ENCODE measurements at regions of chr11 and their contacts with region 1.

Region 1: GRCh38 chr11:75388386-75389275 is 10.7 kb upstream of the RPS3 start:
- DNase-seq: peak; percentile 73
- H3K4me3 ChIP-seq: no peak overlapping the region
- H3K27ac ChIP-seq: peak overlapping the region in 3 of 4 donors; percentile 20 to 75 (median 69)
- H3K4me1 ChIP-seq: peaks cover 0 to 39% (median 18%) of the 10 kb centered on the region in 4 donors
- H3K27me3 ChIP-seq: no peaks in the 10 kb centered on the region
- CTCF ChIP-seq: peak; percentile 82 to 91 (median 88)
- EP300 ChIP-seq: no peak
- POLR2A ChIP-seq: no peak

Region 2: DNA sequence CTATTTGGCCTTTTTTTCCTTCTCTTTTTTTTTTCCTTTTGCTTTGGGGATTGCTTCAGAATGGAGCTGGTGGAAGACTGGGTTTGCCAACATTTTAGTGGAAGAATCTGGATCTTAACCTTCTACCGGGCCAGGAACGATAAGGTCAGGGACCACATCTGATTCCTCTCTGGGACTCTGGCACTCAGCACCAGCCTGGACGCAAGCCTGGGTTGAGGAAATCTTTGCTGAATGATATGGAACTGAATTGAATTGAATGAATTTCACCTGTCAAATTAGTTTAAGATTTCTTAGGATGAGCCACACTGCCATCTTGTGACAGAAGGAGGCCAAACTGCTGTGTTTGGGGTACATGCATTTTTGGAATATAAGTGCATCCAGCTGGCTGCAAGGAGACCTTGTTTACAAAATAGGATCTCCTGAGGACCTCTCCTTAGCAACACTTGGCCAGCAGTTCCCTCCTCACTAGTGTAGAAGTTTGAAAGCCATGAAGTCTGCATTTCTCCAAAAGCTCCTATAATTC is 117.7 kb before region 1 on chr11:
- in situ Hi-C with region 1: loop called (anchors 5 to 10 kb)
- intact Hi-C with region 1: no loop called
- DNase-seq: peak; percentile 6
- H3K4me3 ChIP-seq: no peak overlapping the region
- H3K27ac ChIP-seq: no peak overlapping the region
- H3K4me1 ChIP-seq: no peaks in the 10 kb centered on the region
- H3K27me3 ChIP-seq: no peaks in the 10 kb centered on the region
- CTCF ChIP-seq: no peak
- EP300 ChIP-seq: no peak
- POLR2A ChIP-seq: no peak

Region 3: DNA sequence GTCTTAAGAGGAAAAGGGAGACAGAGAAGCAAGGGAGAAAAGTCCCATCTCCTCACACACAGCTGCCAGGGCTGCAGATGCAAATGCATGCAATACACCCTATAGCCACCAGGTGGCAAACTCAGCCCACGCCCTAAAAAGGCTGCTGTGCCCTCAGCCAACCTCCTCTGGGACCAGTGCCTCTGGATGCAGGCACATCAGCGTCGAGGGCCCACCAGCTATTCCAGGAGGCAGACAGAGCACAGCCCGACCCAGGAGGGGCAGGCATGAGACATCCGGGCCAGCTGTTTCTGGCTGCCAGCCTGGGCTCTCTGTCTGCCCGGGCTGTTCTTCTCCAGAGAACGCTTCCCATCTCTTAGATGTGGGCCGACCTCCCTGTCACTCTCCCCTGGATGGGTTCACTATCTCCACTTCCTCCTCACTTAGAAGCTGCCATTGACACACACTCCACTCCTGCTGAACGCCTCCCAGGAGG is 108.4 kb before region 1 on chr11:
- in situ Hi-C with region 1: loop called (anchors 5 to 10 kb)
- intact Hi-C with region 1: loop called (anchors 1 kb)
- DNase-seq: peak; percentile 83
- H3K4me3 ChIP-seq: no peak overlapping the region
- H3K27ac ChIP-seq: peak overlapping the region in 3 of 4 donors; percentile 13 to 24 (median 18)
- H3K4me1 ChIP-seq: peaks cover 0 to 9% (median 3%) of the 10 kb centered on the region in 4 donors
- H3K27me3 ChIP-seq: no peaks in the 10 kb centered on the region
- CTCF ChIP-seq: peak; percentile 96 to 98 (median 98)
- EP300 ChIP-seq: no peak
- POLR2A ChIP-seq: no peak

Region 4: DNA sequence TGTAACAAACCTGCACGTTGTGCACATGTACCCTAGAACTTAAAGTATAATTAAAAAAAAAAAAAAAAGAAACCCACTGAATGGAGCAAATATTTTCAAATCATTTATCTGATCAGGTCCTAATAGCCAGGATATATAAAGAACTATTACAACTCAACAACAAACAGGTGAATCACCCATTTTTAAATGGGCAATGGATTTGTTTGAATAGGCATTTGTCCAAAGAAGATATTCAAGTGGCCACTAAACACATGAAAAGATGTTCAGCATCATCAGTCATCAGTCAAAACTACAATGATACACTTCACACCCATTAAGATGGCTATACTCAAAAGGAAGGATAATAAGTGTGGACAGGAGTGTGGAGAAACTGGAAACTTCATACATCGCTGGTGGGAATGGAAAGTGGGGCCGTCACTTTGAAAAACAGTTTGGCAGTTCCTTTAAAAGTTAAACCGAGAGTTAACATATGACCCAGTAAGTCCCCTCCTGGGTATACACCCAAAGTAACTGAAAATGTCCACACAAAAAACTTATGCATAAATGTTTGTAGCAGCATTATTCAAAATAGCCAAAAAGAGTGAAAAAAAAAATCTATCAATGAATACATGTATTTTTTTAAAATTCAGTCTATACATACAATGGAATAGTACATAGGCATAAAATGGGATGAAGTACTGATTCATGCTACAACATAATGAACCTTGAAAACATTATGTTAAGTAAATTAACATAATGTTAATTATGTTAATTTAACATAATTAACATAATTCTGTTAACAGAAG is 90.2 kb before region 1 on chr11:
- in situ Hi-C with region 1: no loop called
- intact Hi-C with region 1: no loop called
- DNase-seq: no peak
- H3K4me3 ChIP-seq: no peak overlapping the region
- H3K27ac ChIP-seq: no peak overlapping the region
- H3K4me1 ChIP-seq: peaks cover 10 to 21% (median 15%) of the 10 kb centered on the region in 4 donors
- H3K27me3 ChIP-seq: no peaks in the 10 kb centered on the region
- CTCF ChIP-seq: no peak
- EP300 ChIP-seq: no peak
- POLR2A ChIP-seq: no peak

Region 5: DNA sequence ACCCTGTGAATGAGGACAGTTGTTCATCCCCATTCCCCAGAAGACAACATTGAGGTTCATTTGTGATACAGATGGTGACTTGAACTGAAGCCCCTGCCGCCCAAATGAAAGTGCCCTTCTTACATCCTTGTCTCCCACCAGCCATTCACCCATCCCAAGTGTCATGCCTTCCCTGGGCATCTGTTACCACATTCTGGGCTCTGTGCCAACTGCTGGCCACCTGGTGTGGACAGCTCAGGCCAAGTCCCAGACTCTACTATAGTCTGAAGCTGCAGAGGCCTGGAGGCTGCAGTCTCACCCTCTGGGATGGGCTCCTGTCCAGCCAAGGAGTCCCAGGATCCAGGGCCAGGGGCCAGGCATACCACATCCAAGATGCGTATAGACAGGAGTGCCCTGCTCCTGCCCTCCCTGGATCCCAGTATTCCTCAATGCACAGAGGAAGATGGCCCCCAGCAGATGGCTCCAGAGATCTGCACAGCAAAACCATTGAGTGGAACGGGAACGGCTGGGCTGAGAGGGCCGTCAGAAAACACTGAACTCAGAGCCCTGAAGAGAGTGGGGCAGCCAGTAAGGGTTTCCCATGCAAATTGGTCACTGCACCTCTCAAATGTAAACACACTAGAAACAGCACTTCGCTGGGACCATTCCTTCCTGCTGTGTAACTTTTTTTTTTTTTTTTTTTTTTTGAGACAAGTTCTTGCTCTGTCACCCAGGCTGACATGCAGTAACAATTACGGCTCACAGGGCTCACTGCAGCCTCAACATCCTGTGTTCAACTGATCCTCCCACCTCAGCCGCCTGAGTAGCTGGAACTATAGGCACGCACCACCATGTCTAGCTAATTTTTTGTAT is 60.0 kb before region 1 on chr11:
- in situ Hi-C with region 1: loop called in 3 of 4 experiments (anchors 5 to 10 kb)
- intact Hi-C with region 1: loop called (anchors 1 kb)
- DNase-seq: peak; percentile 85
- H3K4me3 ChIP-seq: no peak overlapping the region
- H3K27ac ChIP-seq: peak overlapping the region; percentile 80 to 87 (median 83)
- H3K4me1 ChIP-seq: peaks cover 53 to 85% (median 78%) of the 10 kb centered on the region in 4 donors
- H3K27me3 ChIP-seq: no peaks in the 10 kb centered on the region
- CTCF ChIP-seq: peak; percentile 58 to 82 (median 69)
- EP300 ChIP-seq: no peak
- POLR2A ChIP-seq: no peak

Region 6: DNA sequence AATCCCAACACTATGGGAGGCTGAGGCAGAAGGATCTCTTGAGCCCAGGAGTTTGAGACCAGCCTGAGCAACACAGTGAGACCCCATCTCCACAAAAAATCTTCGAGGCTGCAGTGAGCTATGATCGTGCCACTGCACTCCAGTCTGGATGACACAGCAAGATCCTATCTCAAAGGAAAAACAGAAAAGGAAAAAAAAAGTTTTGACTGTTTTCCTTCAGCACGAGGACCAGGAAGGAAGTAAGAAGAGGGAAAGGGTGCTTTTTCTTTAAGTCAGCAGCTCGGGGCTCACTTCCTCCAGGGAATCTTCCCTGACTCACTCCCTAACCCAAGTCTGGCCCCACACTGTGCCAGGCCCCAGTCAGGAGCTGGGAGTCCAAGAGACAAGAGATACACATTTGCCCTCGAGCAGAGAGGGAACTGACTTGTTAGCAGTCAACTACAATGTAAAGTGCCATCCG is 51.4 kb before region 1 on chr11:
- in situ Hi-C with region 1: loop called in 2 of 4 experiments (anchors 5 to 10 kb)
- intact Hi-C with region 1: no loop called
- DNase-seq: no peak
- H3K4me3 ChIP-seq: no peak overlapping the region
- H3K27ac ChIP-seq: peak overlapping the region; percentile 52 to 97 (median 94)
- H3K4me1 ChIP-seq: peaks cover 75 to 90% (median 83%) of the 10 kb centered on the region in 4 donors
- H3K27me3 ChIP-seq: no peaks in the 10 kb centered on the region
- CTCF ChIP-seq: no peak
- EP300 ChIP-seq: no peak
- POLR2A ChIP-seq: no peak

Region 7: GRCh38 chr11:75532200-75533048 is 143.8 kb after region 1 on chr11:
- in situ Hi-C with region 1: no loop called
- intact Hi-C with region 1: loop called (anchors 2 kb)
- DNase-seq: peak; percentile 80
- H3K4me3 ChIP-seq: no peak overlapping the region
- H3K27ac ChIP-seq: no peak overlapping the region
- H3K4me1 ChIP-seq: peaks cover 0 to 10% (median 2%) of the 10 kb centered on the region in 4 donors
- H3K27me3 ChIP-seq: no peaks in the 10 kb centered on the region
- CTCF ChIP-seq: peak; percentile 92 to 96 (median 93)
- EP300 ChIP-seq: no peak
- POLR2A ChIP-seq: no peak

Region 8: DNA sequence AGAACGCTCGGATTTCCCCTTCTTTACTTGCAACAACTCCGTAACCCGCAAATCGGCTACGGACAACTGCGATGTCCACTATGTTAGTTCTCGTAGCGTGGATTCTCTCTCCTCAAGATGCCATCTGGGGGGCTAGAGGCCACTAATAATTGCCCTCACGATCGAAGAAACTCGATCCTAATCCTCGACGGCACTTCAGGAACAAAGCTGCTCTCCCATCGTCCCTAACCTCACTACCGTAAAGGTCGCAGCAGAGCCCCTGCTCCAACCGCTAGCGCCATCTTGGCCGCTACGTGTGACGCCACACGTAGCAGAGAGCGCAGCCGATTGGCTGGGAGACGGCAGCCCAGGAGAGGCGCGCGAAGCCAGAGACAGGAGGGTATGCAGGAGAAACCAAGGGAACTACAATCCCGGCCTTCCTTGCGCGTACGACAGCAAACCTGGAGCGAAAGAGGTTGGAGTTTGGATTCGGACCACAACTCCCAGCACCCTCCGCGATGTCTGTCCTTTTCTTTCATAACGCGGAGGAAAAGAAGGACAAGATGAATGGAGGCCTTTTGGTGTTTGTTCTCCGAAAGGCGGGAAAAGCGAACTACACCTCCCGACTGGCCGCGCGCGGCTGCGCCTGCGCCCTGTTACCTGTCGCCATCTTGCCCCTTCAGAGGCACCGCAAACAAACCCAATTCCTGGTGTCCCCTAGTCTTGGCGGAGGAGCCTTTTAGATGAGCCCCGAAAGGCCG is 1055.9 kb after region 1 on chr11 and contains the start of gene EMSY:
- in situ Hi-C with region 1: no loop called
- intact Hi-C with region 1: loop called (anchors 10 kb)
- DNase-seq: peak; percentile 96
- H3K4me3 ChIP-seq: peak within 1 kb of the TSS; percentile 76 to 99 (median 94)
- H3K27ac ChIP-seq: peak within 1 kb of the TSS; percentile 93 to 97 (median 94)
- H3K4me1 ChIP-seq: peaks cover 6 to 26% (median 17%) of the 10 kb centered on the region in 4 donors
- H3K27me3 ChIP-seq: no peaks in the 10 kb centered on the region
- CTCF ChIP-seq: peak in 1 of 5 experiments; percentile 9
- EP300 ChIP-seq: no peak
- POLR2A ChIP-seq: peak; percentile 99
- total RNA-seq, gene EMSY: 35.7 to 79.6 (median 43.8) TPM

Measured in transverse colon (tissue), 4 donors.